ENCODE measurements at regions of chr6 and their contacts with region 1.

Region 1: GRCh38 chr6:13407709-13408695 is 79.4 kb downstream of the GFOD1 start:
- DNase-seq: peak; percentile 100
- ATAC-seq: peak; percentile 82
- H3K4me3 ChIP-seq: peak overlapping the region; percentile 8 to 23 (median 19); a peak in 4 of 6 replicates
- H3K27ac ChIP-seq: peak overlapping the region; percentile 78
- H3K4me1 ChIP-seq: peaks cover 74% of the 10 kb centered on the region
- H3K27me3 ChIP-seq: no peaks in the 10 kb centered on the region
- CTCF ChIP-seq: no peak
- EP300 ChIP-seq: peak; percentile 91 to 96
- POLR2A ChIP-seq: peak in 1 of 2 experiments; percentile 39; a peak in 1 of 4 replicates
- RAD21 ChIP-seq: peak; percentile 12; the same call in 1 of the 2 replicates

Region 2: GRCh38 chr6:13419422-13420195 is 11.6 kb after region 1 on chr6:
- CTCF ChIA-PET with region 1: no interaction called
- POLR2A ChIA-PET with region 1: interaction called, 10 read pairs
- in situ Hi-C with region 1: no loop called
- intact Hi-C with region 1: no loop called
- DNase-seq: no peak
- ATAC-seq: no peak
- H3K4me3 ChIP-seq: no peak overlapping the region
- H3K27ac ChIP-seq: no peak overlapping the region
- H3K4me1 ChIP-seq: peaks cover 36% of the 10 kb centered on the region
- H3K27me3 ChIP-seq: no peaks in the 10 kb centered on the region
- CTCF ChIP-seq: no peak
- EP300 ChIP-seq: no peak
- POLR2A ChIP-seq: no peak
- RAD21 ChIP-seq: no peak

Region 3: DNA sequence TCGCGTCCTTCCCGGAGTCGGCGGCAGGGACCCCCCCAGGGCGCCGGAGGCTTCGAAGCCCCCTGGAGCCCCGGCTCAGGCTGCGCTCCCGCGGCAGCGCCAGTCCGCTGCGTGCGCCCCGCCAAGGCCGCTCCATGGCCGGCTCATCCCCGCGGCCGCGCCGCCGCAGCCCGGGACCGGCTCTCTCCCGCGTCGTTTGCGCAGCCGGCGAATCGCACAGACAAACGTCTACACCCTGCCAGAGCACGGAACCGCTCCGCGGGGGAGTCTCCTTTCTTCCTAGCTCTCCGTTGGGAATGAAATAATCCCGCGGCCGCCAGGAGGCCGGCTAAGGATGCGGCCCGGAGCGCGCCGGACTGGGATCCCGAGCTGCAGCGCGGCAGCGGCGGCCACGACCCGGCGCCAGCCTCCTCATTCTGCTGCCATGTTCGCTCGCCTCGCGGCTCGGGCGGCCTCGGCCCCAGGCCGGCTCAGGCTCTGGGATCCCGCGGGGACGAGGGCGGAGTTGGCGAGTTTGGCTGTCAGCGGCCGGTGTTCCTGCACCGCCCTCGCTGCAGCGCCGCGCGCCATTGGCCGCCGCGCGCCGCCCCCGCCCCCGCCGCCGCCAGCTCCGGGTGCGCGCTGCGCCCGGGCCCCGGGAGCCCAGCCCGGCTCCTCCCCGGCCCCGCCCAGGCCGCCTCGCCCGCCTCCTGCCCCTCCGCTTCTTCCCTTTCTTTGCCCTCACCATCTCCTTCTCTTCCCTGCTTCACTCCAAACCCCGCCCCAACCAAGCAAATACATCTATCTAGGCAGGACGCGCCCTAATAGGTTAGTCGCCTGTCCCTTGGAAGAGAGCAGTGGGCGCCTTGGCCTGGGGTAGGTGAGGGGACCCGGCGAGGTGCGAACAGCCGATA is 79.4 kb after region 1 on chr6 and contains the start of gene GFOD1:
- CTCF ChIA-PET with region 1: no interaction called
- POLR2A ChIA-PET with region 1: interaction called, 25 read pairs
- in situ Hi-C with region 1: loop called (anchors 5 kb)
- intact Hi-C with region 1: loop called (anchors 1 kb)
- DNase-seq: peak; percentile 63
- ATAC-seq: peak; percentile 80
- H3K4me3 ChIP-seq: peak within 1 kb of the TSS; percentile 69 to 82 (median 80)
- H3K27ac ChIP-seq: peak within 1 kb of the TSS; percentile 25
- H3K4me1 ChIP-seq: peaks cover 47% of the 10 kb centered on the region
- H3K27me3 ChIP-seq: no peaks in the 10 kb centered on the region; a peak in 1 of 5 replicates
- CTCF ChIP-seq: no peak
- EP300 ChIP-seq: no peak
- POLR2A ChIP-seq: peak; percentile 44 to 70; a peak in 3 of 4 replicates
- RAD21 ChIP-seq: peak; percentile 76
- total RNA-seq, gene GFOD1: 6.4 TPM in 2 replicates

Region 4: GRCh38 chr6:13604546-13605416 is 196.8 kb after region 1 on chr6:
- CTCF ChIA-PET with region 1: no interaction called
- POLR2A ChIA-PET with region 1: interaction called, 7 read pairs
- in situ Hi-C with region 1: no loop called
- intact Hi-C with region 1: loop called (anchors 2 kb)
- DNase-seq: peak; percentile 100
- ATAC-seq: peak; percentile 94
- H3K4me3 ChIP-seq: peak overlapping the region in 2 of 3 experiments; percentile 32 to 46; a peak in 2 of 6 replicates
- H3K27ac ChIP-seq: peak overlapping the region; percentile 87
- H3K4me1 ChIP-seq: peaks cover 44% of the 10 kb centered on the region
- H3K27me3 ChIP-seq: no peaks in the 10 kb centered on the region
- CTCF ChIP-seq: no peak
- EP300 ChIP-seq: peak; percentile 97 to 99
- POLR2A ChIP-seq: peak in 1 of 2 experiments; percentile 46; a peak in 1 of 4 replicates
- RAD21 ChIP-seq: peak; percentile 9; the same call in 1 of the 2 replicates